Caco-2 (cell line): ENCODE measurements at regions of chr5 and their contacts with region 1.

Region 1: DNA sequence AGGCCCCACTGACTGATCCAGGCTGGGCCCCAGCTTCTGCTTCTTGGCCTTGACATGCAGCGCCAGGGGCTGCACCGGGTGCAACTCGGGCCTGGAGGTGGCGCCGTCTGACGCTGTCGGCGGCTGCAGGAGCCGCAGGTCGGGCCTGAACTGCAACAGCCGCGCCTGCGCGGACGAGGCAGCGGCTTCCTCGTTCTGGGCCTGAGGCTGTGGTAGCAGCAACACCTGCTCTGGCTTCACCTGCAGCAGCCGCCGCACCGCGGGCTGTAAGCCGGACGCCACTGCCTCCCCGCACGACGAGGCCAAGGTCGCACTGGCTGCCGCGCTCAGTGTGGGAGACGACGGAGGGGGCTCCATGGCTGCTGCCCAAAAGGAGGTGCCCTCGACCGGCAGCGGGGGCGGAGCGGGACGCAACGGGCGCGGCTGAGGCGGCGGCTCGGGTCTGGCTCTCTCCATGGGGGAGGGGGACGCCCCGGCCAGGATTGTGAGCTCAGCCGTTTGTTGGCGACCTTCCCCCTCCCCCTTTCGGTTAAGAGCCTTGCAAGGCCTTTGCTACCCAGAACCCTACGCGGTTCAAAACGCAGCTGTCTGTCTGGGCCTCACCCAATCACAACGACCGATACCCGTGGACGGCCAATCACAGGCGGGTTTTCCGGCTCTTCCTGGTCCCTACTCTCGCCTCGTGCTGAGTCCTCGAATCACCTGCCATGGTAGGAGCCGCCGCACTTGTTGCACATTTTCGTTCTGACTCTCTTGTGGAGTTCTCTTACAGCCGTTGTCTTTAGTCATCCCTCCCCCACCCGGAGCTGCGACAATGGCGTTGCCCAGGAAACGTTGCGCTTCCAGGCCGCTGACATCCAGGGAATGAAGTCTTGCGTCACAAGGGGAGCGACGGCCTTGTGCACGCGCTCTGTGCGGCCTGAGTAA is at the start of gene SOX30:
- DNase-seq: peak; percentile 92 to 93
- H3K4me3 ChIP-seq: peak within 1 kb of the TSS; percentile 57
- H3K4me3 Mint-ChIP-seq: peak within 1 kb of the TSS; percentile 73
- H3K27ac Mint-ChIP-seq: peak within 1 kb of the TSS; percentile 90
- H3K4me1 ChIP-seq: peaks cover 7% of the 10 kb centered on the region
- H3K4me1 Mint-ChIP-seq: peaks cover 6% of the 10 kb centered on the region
- H3K27me3 ChIP-seq: no peaks in the 10 kb centered on the region
- H3K27me3 Mint-ChIP-seq: no peaks in the 10 kb centered on the region
- CTCF ChIP-seq: peak; percentile 22 to 62
- total RNA-seq, gene SOX30: 2.9 and 3.1 TPM in 2 replicates

Region 2: DNA sequence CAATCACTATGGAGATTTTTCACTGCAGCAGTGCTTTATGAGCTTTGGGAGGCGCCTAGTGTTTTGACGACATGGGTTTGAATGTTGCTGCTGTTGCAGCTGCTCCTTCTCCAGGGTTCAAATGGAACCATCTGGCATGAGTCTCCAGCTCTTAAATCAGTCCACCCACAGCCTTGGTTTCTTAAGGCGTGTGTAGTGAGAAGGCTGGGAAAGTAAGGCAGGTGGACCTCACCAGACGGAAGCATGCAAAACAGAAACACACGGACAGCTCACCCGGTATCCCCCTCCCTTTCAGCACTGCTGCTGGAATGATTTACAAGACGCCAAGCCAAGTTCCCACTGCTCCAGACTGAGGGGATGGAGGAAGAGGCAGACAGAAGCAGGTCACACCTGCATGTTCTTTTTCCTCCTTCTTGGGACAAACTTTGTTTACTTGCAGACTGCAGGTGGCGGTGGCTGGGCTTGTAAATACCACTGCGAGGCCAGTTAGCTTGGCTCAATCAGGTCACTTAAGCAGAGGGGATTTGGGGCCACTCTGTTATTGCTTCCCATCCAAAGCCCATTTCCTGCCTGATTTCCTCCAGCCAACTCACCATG is 123.8 kb before region 1 on chr5:
- CTCF ChIA-PET with region 1: no interaction called
- POLR2A ChIA-PET with region 1: no interaction called
- intact Hi-C with region 1: loop called (anchors 1 kb)
- DNase-seq: peak in 1 of 2 experiments; percentile 13
- H3K4me3 ChIP-seq: no peak overlapping the region
- H3K4me3 Mint-ChIP-seq: no peak overlapping the region
- H3K27ac Mint-ChIP-seq: no peak overlapping the region
- H3K4me1 ChIP-seq: no peaks in the 10 kb centered on the region
- H3K4me1 Mint-ChIP-seq: no peaks in the 10 kb centered on the region
- H3K27me3 ChIP-seq: no peaks in the 10 kb centered on the region
- H3K27me3 Mint-ChIP-seq: no peaks in the 10 kb centered on the region
- CTCF ChIP-seq: peak in 1 of 2 experiments; percentile 16

Region 3: GRCh38 chr5:157558041-157558595 is 93.8 kb before region 1 on chr5:
- CTCF ChIA-PET with region 1: no interaction called
- POLR2A ChIA-PET with region 1: interaction called, 17 read pairs
- intact Hi-C with region 1: no loop called
- DNase-seq: peak in 1 of 2 experiments; percentile 41
- H3K4me3 ChIP-seq: no peak overlapping the region
- H3K4me3 Mint-ChIP-seq: no peak overlapping the region
- H3K27ac Mint-ChIP-seq: no peak overlapping the region
- H3K4me1 ChIP-seq: peaks cover 37% of the 10 kb centered on the region
- H3K4me1 Mint-ChIP-seq: peaks cover 36% of the 10 kb centered on the region
- H3K27me3 ChIP-seq: no peaks in the 10 kb centered on the region
- H3K27me3 Mint-ChIP-seq: no peaks in the 10 kb centered on the region
- CTCF ChIP-seq: no peak

Region 4: GRCh38 chr5:157575381-157576020 is 76.4 kb before region 1 on chr5 and contains the start of gene ADAM19:
- CTCF ChIA-PET with region 1: interaction called, 3 read pairs
- POLR2A ChIA-PET with region 1: no interaction called
- intact Hi-C with region 1: loop called (anchors 5 kb)
- DNase-seq: peak; percentile 62 to 80
- H3K4me3 ChIP-seq: peak within 1 kb of the TSS; percentile 75
- H3K4me3 Mint-ChIP-seq: peak within 1 kb of the TSS; percentile 92
- H3K27ac Mint-ChIP-seq: peak within 1 kb of the TSS; percentile 50
- H3K4me1 ChIP-seq: peaks cover 37% of the 10 kb centered on the region
- H3K4me1 Mint-ChIP-seq: peaks cover 48% of the 10 kb centered on the region
- H3K27me3 ChIP-seq: no peaks in the 10 kb centered on the region
- H3K27me3 Mint-ChIP-seq: no peaks in the 10 kb centered on the region
- CTCF ChIP-seq: no peak
- total RNA-seq, gene ADAM19: 62.9 and 69.4 TPM in 2 replicates

Region 5: DNA sequence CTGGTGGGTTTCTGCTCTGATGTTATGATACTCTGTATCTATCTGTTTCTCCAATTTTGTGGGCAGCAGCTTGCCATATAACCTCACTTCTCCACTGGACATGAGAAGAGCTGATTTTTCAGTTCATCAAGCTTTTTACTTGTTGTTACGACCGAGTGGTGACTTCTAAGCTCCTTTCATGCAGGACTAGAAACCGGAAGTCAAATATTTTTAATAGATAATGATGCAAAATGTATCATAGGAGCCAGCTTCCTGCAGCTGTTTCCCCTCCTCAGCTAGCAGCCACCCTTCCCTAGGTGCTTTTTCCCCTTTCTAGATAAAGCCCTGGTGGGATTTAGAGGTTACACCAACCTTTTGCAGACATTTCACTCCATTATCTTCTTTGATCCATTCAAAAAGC is 59.3 kb before region 1 on chr5:
- CTCF ChIA-PET with region 1: interaction called, 8 read pairs
- POLR2A ChIA-PET with region 1: no interaction called
- intact Hi-C with region 1: loop called (anchors 5 kb)
- DNase-seq: no peak
- H3K4me3 ChIP-seq: no peak overlapping the region
- H3K4me3 Mint-ChIP-seq: no peak overlapping the region
- H3K27ac Mint-ChIP-seq: no peak overlapping the region
- H3K4me1 ChIP-seq: peaks cover 39% of the 10 kb centered on the region
- H3K4me1 Mint-ChIP-seq: peaks cover 28% of the 10 kb centered on the region
- H3K27me3 ChIP-seq: no peaks in the 10 kb centered on the region
- H3K27me3 Mint-ChIP-seq: no peaks in the 10 kb centered on the region
- CTCF ChIP-seq: no peak

Region 6: GRCh38 chr5:157670662-157671591 is 19.0 kb after region 1 on chr5 and contains the start of gene C5orf52:
- CTCF ChIA-PET with region 1: interaction called, 7 read pairs
- POLR2A ChIA-PET with region 1: no interaction called
- intact Hi-C with region 1: loop called (anchors 1 kb)
- DNase-seq: peak; percentile 58 to 80
- H3K4me3 ChIP-seq: peak within 1 kb of the TSS; percentile 21
- H3K4me3 Mint-ChIP-seq: peak within 1 kb of the TSS; percentile 66
- H3K27ac Mint-ChIP-seq: peak within 1 kb of the TSS; percentile 89
- H3K4me1 ChIP-seq: peaks cover 22% of the 10 kb centered on the region
- H3K4me1 Mint-ChIP-seq: peaks cover 17% of the 10 kb centered on the region
- H3K27me3 ChIP-seq: no peaks in the 10 kb centered on the region
- H3K27me3 Mint-ChIP-seq: no peaks in the 10 kb centered on the region
- CTCF ChIP-seq: no peak
- total RNA-seq, gene C5orf52: not detected in 2 replicates

Region 7: GRCh38 chr5:157689942-157690689 is 38.2 kb after region 1 on chr5:
- CTCF ChIA-PET with region 1: no interaction called
- POLR2A ChIA-PET with region 1: no interaction called
- intact Hi-C with region 1: no loop called
- DNase-seq: no peak
- H3K4me3 ChIP-seq: no peak overlapping the region
- H3K4me3 Mint-ChIP-seq: no peak overlapping the region
- H3K27ac Mint-ChIP-seq: no peak overlapping the region
- H3K4me1 ChIP-seq: 0 out of 2 replicates have a peak, but pooled peaks cover 7% of the 10 kb centered on the region
- H3K4me1 Mint-ChIP-seq: peaks cover 5% of the 10 kb centered on the region
- H3K27me3 ChIP-seq: no peaks in the 10 kb centered on the region
- H3K27me3 Mint-ChIP-seq: no peaks in the 10 kb centered on the region
- CTCF ChIP-seq: no peak

Region 8: DNA sequence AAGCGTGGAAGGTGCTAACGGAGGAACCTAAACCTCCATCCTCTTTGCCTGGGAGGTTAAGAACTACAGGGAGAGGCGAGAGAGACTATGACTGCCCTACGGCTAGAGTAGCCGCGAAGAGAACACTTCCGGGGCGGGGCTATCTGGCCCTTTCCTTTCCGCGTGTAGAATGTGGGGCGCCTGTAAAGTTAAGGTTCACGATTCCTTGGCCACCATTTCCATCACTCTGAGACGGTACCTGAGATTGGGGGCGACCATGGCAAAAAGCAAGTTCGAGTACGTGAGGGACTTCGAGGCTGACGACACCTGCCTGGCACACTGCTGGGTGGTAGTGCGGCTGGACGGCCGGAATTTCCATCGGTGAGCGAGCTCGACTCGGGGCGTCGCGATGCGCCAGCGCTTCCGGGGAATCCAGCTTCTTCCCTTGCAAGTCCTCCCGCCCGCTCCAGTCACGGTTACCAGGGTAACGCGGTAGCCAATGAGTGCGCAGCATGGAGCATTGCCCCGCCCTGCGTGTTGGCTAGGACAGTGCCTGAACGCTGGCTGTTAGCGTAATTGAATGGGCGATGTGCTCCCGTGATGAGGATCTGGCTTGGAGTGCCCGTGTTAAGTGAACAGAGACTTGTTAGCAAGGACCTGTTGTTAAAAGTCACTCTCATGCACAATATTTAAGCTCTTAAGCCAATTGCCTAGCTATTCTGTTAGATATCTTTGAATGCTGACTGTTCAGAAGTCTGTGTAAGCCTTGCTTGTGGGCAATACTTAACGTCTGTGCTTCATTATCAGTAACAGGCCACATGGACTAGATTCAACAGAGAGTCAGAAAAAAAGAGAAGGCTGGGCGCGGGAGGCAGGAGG is 79.6 kb after region 1 on chr5 and contains the start of gene THG1L:
- CTCF ChIA-PET with region 1: interaction called, 10 read pairs
- POLR2A ChIA-PET with region 1: interaction called, 5 read pairs
- intact Hi-C with region 1: no loop called
- DNase-seq: peak; percentile 98
- H3K4me3 ChIP-seq: peak within 1 kb of the TSS; percentile 84
- H3K4me3 Mint-ChIP-seq: peak within 1 kb of the TSS; percentile 100
- H3K27ac Mint-ChIP-seq: peak within 1 kb of the TSS; percentile 99
- H3K4me1 ChIP-seq: 0 out of 2 replicates have a peak, but pooled peaks cover 4% of the 10 kb centered on the region
- H3K4me1 Mint-ChIP-seq: peaks cover 10% of the 10 kb centered on the region
- H3K27me3 ChIP-seq: no peaks in the 10 kb centered on the region
- H3K27me3 Mint-ChIP-seq: no peaks in the 10 kb centered on the region
- CTCF ChIP-seq: no peak
- total RNA-seq, gene THG1L: 19.8 and 22.9 TPM in 2 replicates